T-cell (primary cell): ENCODE measurements at regions of chr5 and their contacts with region 1.

Region 1: DNA sequence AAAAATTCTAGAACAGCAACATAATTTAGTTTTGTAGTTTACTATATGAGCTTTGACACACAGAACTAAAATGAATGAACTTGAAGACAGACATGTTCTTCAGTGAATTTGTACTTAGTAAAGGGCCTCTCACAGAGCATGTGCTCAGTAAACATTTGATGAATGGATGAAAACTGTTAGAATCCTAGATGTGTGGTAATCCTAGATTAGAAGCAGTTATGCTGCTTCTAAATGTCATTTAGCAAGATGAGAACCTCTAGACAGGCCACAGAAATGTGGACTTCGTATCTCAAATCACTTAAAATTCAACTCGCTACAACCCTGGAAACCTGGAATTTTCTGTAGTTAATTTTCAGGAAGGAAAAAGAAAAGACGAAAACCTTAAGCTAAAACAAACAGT is 8.5 kb downstream of the GOLPH3 start:
- DNase-seq: no peak
- ATAC-seq: no peak
- H3K4me3 ChIP-seq: no peak overlapping the region
- H3K4me3 Mint-ChIP-seq: no peak overlapping the region
- H3K27ac ChIP-seq: no peak overlapping the region
- H3K27ac Mint-ChIP-seq: no peak overlapping the region
- H3K4me1 ChIP-seq: peaks cover 6 to 18% of the 10 kb centered on the region in 2 experiments
- H3K4me1 Mint-ChIP-seq: peaks cover 38 to 68% (median 57%) of the 10 kb centered on the region in 3 donors
- H3K27me3 ChIP-seq: no peaks in the 10 kb centered on the region
- H3K27me3 Mint-ChIP-seq: no peaks in the 10 kb centered on the region

Region 2: GRCh38 chr5:32107291-32107690 is 58.3 kb before region 1 on chr5:
- CTCF ChIA-PET with region 1: no interaction called
- POLR2A ChIA-PET with region 1: no interaction called
- DNase-seq: no peak
- ATAC-seq: no peak
- H3K4me3 ChIP-seq: no peak overlapping the region
- H3K4me3 Mint-ChIP-seq: no peak overlapping the region
- H3K27ac ChIP-seq: no peak overlapping the region
- H3K27ac Mint-ChIP-seq: peak overlapping the region in 1 of 2 donors; percentile 16
- H3K4me1 ChIP-seq: no peaks in the 10 kb centered on the region
- H3K4me1 Mint-ChIP-seq: no peaks in the 10 kb centered on the region
- H3K27me3 ChIP-seq: no peaks in the 10 kb centered on the region
- H3K27me3 Mint-ChIP-seq: no peaks in the 10 kb centered on the region

Region 3: DNA sequence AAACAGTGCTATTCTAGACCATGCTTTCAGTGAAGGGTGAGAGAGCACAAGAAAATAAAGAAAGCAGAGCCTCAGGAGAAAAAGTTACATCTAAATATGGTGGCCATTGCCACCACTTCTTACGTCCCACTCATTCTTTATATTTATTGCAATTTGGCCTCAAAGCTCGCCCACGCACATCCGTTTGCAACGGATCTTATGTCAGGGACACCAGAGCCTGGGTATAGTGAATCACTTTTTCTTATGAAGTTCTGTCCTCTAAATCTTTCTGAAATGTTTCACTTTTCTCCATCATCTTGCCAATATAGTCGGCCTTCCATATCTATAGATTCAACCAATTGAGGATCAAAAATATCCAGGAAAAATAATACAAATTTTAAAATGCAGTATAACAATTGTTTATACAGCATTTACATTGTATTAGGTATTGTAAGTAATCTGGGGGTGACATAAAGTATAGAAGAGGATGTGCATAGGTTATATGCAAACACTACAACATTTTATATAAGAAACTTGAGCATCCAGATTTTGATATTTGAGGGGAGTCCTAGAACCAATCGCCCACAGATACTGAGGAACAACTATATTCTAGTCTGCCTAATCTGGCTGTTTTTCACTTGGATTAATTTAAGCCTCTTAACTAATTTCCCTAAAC is 26.6 kb before region 1 on chr5:
- CTCF ChIA-PET with region 1: no interaction called
- POLR2A ChIA-PET with region 1: interaction called, 3 to 10 read pairs
- DNase-seq: peak in 6 of 35 experiments; percentile 4 to 18 (median 6)
- ATAC-seq: no peak
- H3K4me3 ChIP-seq: no peak overlapping the region
- H3K4me3 Mint-ChIP-seq: no peak overlapping the region
- H3K27ac ChIP-seq: no peak overlapping the region
- H3K27ac Mint-ChIP-seq: peak overlapping the region; percentile 1 to 36
- H3K4me1 ChIP-seq: no peaks in the 10 kb centered on the region
- H3K4me1 Mint-ChIP-seq: peaks cover 30 to 34% (median 31%) of the 10 kb centered on the region in 3 donors
- H3K27me3 ChIP-seq: no peaks in the 10 kb centered on the region
- H3K27me3 Mint-ChIP-seq: no peaks in the 10 kb centered on the region